Colonic mucosa (tissue), 4 donors: ENCODE measurements at regions of chr19 and their contacts with region 1.

Region 1: GRCh38 chr19:2475702-2476450 is at the start of gene GADD45B:
- DNase-seq: peak; percentile 98
- H3K4me3 ChIP-seq: peak within 1 kb of the TSS; percentile 73
- H3K27ac ChIP-seq: peak within 1 kb of the TSS; percentile 88
- H3K4me1 ChIP-seq: no peaks in the 10 kb centered on the region
- H3K27me3 ChIP-seq: no peaks in the 10 kb centered on the region
- CTCF ChIP-seq: no peak
- total RNA-seq, gene GADD45B: 17.5 to 21.6 TPM

Region 2: DNA sequence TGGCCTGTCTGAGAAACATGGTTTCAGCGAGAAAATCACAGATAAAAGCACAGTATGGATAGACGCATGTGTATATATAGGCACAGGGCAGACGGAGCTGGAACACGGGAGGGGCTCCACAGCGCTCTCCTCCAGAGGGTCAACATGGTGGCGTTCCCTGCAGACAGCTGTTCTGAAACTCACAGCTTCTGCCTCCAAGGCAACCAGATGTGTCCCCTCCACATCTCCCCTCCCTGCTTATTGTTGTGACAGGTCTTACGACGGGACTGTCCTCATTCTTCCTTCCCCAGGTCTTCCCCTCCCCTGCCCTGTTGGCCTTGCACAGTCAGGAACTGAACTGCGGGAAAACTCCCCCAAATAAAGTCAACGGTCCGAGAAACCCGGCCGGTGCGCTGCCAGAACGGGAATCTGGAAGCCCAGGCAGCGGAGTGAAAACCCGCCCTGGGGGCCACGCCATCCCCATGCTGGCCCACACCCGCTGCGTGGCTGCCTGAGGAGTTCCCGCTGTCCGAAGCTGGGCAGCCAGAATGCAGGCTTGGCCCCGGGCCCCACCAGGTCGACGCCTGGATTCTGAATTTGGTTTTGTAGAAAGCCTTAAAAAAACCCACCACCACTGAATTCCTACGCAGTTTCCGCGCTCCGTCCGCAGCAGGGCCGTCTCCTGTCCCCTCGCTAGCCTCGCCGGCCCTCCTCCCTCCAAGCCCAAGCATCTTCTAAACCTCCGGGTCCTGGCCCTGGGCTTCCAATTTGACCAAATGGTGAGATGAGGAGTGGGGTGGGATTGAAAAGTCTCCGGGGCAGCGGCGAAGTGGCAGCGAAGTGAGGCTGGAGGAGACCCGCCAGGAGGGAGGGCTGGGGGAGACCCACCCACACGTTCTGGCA is 45.7 kb before region 1 on chr19:
- intact Hi-C with region 1: no loop called
- DNase-seq: no peak
- H3K4me3 ChIP-seq: no peak overlapping the region
- H3K27ac ChIP-seq: no peak overlapping the region
- H3K4me1 ChIP-seq: peaks cover 17% of the 10 kb centered on the region
- H3K27me3 ChIP-seq: no peaks in the 10 kb centered on the region
- CTCF ChIP-seq: no peak

Region 3: DNA sequence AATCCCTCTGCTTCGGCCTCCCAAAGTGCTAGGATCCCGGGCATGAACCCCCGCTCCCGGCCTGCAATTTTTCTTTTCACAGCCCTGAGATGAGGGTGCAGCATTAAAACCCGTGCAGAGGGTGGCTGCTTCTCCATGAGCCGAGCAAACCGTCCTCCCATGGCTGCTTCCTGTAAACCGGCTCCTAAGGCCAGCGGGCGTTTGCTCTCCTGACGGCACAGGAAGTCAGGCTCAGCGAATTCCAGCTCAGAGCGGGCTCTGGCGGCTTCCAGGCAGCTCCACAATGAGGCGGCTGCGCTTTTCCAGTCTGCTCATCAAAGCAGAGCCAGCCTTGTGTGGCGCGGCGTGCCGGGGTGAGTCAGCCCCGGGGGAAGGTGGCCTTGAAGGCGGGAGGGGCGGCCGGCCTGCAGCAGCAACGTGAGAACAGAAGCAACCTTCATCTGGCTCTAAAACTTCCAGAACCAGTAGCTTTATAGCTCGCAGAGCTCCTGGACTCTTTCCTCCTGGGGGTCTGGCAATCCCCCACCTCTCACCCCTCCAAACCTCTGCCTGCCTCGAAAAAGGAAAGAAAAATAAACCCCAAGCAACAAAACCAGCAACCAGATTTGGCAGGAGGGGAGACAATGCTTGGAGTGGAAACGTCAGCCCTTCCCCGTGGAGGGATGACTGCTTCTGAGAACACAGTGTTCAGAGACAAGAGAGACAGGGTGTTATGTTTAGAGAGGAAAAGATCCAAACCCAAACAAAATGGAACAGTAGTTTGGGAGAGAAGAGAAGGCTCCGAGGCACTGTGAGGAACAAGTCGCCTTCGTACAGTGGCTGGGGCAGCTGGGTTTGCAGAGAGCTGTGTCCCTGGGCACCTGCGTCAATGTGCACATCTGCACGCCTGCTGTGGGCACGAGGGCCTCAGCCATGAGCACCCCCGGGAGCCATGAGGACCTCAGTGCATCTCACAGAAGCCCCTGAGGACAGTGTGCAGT is 67.9 kb after region 1 on chr19:
- intact Hi-C with region 1: loop called (anchors 5 kb)
- DNase-seq: peak; percentile 88
- H3K4me3 ChIP-seq: peak overlapping the region; percentile 4
- H3K27ac ChIP-seq: peak overlapping the region; percentile 87
- H3K4me1 ChIP-seq: peaks cover 20% of the 10 kb centered on the region
- H3K27me3 ChIP-seq: no peaks in the 10 kb centered on the region
- CTCF ChIP-seq: no peak

Region 4: DNA sequence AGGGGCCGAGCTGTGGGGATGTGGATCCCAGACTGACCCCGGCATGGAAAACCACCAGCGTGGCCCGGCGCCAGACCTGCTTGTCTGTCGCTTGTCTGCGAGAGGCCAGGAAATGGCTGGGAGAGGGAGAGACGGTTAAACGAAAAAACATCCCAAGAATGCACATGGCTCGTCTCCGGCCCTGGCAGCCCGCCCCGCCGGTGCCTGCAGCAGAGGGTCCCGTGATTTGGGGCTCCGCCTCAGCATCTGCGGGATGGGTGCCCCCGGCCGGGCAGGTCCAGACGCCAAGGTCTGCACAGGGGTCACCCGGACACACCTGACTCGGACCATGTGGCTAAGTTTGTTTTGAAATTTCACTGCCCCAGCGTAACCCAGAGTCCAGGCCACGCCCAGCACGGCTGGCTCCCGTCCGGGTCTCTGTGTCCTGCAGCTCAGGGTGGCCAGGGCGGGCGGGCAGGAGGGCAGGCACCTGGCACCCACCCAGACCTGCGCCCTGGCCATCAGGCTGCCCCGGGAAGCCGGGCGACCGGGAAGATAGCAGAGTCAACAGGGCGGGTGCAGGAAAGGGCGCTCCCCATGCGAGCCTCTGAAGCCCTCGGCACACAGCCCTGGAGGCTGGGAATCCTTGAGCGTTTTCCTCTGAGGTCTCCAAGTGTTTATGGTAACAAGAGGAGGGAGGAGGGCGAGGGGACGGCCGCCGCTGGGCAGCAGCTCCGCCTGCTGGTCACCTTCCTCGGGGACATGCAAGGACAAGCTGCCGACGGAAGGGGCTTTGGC is 103.2 kb after region 1 on chr19:
- intact Hi-C with region 1: loop called (anchors 2 kb)
- DNase-seq: peak; percentile 88
- H3K4me3 ChIP-seq: peak overlapping the region; percentile 14
- H3K27ac ChIP-seq: peak overlapping the region; percentile 58
- H3K4me1 ChIP-seq: peaks cover 10% of the 10 kb centered on the region
- H3K27me3 ChIP-seq: no peaks in the 10 kb centered on the region
- CTCF ChIP-seq: peak; percentile 71

Region 5: GRCh38 chr19:2594319-2594718 is 118.4 kb after region 1 on chr19:
- intact Hi-C with region 1: loop called (anchors 5 kb)
- DNase-seq: no peak
- H3K4me3 ChIP-seq: no peak overlapping the region
- H3K27ac ChIP-seq: no peak overlapping the region
- H3K4me1 ChIP-seq: peaks cover 6% of the 10 kb centered on the region
- H3K27me3 ChIP-seq: no peaks in the 10 kb centered on the region
- CTCF ChIP-seq: no peak

Region 6: GRCh38 chr19:2613507-2614295 is 137.8 kb after region 1 on chr19:
- intact Hi-C with region 1: loop called (anchors 2 kb)
- DNase-seq: no peak
- H3K4me3 ChIP-seq: no peak overlapping the region
- H3K27ac ChIP-seq: no peak overlapping the region
- H3K4me1 ChIP-seq: peaks cover 5% of the 10 kb centered on the region
- H3K27me3 ChIP-seq: no peaks in the 10 kb centered on the region
- CTCF ChIP-seq: peak; percentile 94